Activated CD4-positive, alpha-beta T cell treated with anti-CD3 and anti-CD28 coated beads, Interleukin-2, amount 10 ng/mL, durations not matched to agents 24 days and 14 days (primary cell): ENCODE measurements at regions of chr5 and their contacts with region 1.

Region 1: DNA sequence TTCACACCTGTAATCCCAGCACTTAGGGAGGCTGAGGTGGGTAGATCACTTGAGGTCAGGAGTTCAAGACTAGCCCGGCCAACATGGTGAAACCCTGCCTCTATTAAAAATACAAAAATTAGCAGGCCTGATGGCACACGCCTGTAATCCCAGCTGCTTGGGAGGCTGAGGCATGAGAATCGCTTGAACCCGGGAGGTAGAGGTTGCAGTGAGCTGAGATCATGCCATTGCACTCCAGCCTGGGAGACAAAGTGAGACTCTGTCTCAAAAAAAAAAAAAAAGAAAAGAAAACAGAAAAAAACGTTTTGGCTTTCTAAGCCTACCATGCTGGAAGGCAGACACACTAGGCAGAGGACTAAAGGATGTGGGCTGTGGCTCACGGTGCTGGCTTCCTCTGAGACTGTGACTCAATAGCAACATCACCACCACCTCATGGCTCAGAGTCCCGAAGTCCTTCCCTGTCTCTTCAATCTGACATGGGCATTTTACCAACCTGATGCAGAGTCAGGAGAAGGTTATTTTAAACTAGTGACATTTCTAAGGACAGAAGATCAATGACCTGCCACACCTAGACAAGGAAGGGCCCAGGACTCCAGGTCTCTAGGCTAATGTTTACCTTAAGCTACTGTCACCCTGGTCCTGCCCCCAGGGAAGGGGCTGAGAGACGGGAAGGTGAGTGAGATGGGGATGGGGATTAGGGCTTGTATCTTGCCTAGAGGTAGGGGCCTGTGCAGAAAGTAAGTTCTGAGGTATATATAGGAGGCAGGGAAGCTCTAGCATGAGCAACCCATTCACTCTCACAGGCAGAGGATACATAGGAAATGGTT is 3.8 kb downstream of the ECSCR start:
- DNase-seq: peak; percentile 93
- H3K4me3 Mint-ChIP-seq: peak overlapping the region; percentile 75
- H3K27ac Mint-ChIP-seq: peak overlapping the region; percentile 94
- H3K4me1 Mint-ChIP-seq: peaks cover 57% of the 10 kb centered on the region
- H3K27me3 Mint-ChIP-seq: peaks cover under 1% of the 10 kb centered on the region

Region 2: GRCh38 chr5:139422307-139422893 is 36.4 kb before region 1 on chr5:
- intact Hi-C with region 1: loop called (anchors 1 kb)
- DNase-seq: peak; percentile 91
- H3K4me3 Mint-ChIP-seq: no peak overlapping the region
- H3K27ac Mint-ChIP-seq: peak overlapping the region; percentile 62
- H3K4me1 Mint-ChIP-seq: peaks cover 32% of the 10 kb centered on the region
- H3K27me3 Mint-ChIP-seq: no peaks in the 10 kb centered on the region

Region 3: DNA sequence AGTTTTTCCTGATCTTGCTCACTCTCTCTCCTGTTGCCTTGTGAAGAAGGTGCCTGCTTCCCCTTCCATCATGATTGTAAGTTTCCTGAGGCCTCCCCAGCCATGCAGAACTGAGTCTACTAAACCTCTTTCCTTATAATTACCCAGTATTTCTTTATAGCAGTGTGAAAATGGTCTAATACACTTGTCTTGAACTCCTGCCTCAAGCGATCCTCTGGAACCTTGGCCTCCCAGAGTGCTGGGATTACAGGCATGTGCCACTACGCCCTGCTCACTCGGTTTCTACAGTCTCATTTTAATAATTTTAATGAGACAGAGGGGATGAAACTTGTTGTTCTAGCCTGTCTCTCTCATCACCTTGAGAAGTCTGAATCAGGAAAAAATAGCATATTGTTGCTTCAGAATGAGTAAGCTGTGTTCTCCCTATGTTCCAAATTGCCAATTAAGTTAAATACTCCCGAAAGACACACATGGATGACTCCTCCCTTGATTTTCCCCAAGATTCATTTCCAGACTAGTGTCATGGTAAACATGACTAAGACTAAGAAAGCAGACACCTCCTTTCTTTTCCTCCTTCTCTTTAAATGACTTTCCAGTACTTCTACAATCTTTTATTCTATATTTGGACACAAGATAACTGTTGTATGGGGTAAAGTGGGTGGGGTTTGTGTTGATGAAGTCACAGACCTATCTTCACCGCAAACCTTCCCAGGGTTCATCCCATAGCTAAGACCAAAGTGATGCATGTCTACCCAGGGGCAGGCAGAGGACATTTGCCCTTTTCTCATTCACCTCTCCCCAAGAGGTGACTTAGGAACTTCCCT is 11.6 kb before region 1 on chr5:
- intact Hi-C with region 1: loop called (anchors 1 kb)
- DNase-seq: peak; percentile 78
- H3K4me3 Mint-ChIP-seq: peak overlapping the region; percentile 54
- H3K27ac Mint-ChIP-seq: peak overlapping the region; percentile 96
- H3K4me1 Mint-ChIP-seq: peaks cover 61% of the 10 kb centered on the region
- H3K27me3 Mint-ChIP-seq: no peaks in the 10 kb centered on the region